Activated CD4-positive, alpha-beta T cell treated with anti-CD3 and anti-CD28 coated beads for 36 hours (primary cell): ENCODE measurements at regions of chr5 and their contacts with region 1.

Region 1: DNA sequence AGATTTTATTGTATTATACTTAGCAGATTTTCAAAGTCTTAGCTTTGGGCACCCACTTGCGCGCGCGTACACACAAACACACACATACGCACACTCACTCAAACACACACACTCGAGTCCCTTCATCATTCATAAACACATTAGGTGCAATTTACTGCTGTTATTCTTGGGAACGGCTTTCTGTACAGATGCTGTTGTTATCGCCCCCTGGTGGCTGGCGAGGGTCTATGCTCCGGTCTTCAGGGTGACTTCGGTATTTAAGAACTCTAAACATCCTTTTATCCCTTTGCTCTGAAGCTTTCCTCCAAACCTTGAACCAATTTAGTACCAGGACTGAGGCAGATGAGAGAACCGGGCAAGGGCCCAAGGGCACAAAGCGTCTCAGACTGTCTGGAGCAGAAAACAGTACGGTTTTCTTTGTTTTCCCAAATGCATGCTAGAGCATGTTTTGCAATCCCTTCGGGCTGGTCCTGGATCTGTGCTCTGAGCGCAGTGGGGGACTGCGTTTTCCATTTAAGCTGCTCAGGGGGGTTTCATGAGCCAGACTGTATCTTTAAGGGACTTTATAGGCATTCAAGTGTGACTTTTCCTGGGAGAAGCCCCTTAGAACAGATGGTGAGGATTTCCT is 1.7 kb upstream of the SLIT3 start:
- DNase-seq: peak; percentile 83
- ATAC-seq: peak; percentile 78
- H3K4me3 Mint-ChIP-seq: no peak overlapping the region
- H3K27ac Mint-ChIP-seq: no peak overlapping the region
- H3K4me1 Mint-ChIP-seq: peaks cover 13% of the 10 kb centered on the region
- H3K27me3 Mint-ChIP-seq: peaks cover 56% of the 10 kb centered on the region

Region 2: GRCh38 chr5:168706655-168707069 is 595.9 kb before region 1 on chr5:
- CTCF ChIA-PET with region 1: no interaction called
- POLR2A ChIA-PET with region 1: no interaction called
- intact Hi-C with region 1: loop called in 1 of 2 experiments (anchors 1 kb)
- DNase-seq: peak; percentile 68
- ATAC-seq: peak; percentile 84
- H3K4me3 Mint-ChIP-seq: no peak overlapping the region
- H3K27ac Mint-ChIP-seq: no peak overlapping the region
- H3K4me1 Mint-ChIP-seq: peaks cover 2% of the 10 kb centered on the region
- H3K27me3 Mint-ChIP-seq: no peaks in the 10 kb centered on the region

Region 3: GRCh38 chr5:168987543-168988300 is 314.9 kb before region 1 on chr5:
- CTCF ChIA-PET with region 1: interaction called, 5 read pairs
- POLR2A ChIA-PET with region 1: no interaction called
- intact Hi-C with region 1: loop called (anchors 1 to 5 kb)
- DNase-seq: peak; percentile 79
- ATAC-seq: peak; percentile 63
- H3K4me3 Mint-ChIP-seq: no peak overlapping the region
- H3K27ac Mint-ChIP-seq: no peak overlapping the region
- H3K4me1 Mint-ChIP-seq: peaks cover 4% of the 10 kb centered on the region
- H3K27me3 Mint-ChIP-seq: peaks cover 9% of the 10 kb centered on the region

Region 4: GRCh38 chr5:169116961-169117461 is 185.6 kb before region 1 on chr5:
- CTCF ChIA-PET with region 1: no interaction called
- POLR2A ChIA-PET with region 1: no interaction called
- intact Hi-C with region 1: no loop called
- DNase-seq: no peak
- ATAC-seq: no peak
- H3K4me3 Mint-ChIP-seq: no peak overlapping the region
- H3K27ac Mint-ChIP-seq: no peak overlapping the region
- H3K4me1 Mint-ChIP-seq: no peaks in the 10 kb centered on the region
- H3K27me3 Mint-ChIP-seq: peaks cover 14% of the 10 kb centered on the region